ENCODE measurements at regions of chrX and their contacts with region 1.

Region 1: DNA sequence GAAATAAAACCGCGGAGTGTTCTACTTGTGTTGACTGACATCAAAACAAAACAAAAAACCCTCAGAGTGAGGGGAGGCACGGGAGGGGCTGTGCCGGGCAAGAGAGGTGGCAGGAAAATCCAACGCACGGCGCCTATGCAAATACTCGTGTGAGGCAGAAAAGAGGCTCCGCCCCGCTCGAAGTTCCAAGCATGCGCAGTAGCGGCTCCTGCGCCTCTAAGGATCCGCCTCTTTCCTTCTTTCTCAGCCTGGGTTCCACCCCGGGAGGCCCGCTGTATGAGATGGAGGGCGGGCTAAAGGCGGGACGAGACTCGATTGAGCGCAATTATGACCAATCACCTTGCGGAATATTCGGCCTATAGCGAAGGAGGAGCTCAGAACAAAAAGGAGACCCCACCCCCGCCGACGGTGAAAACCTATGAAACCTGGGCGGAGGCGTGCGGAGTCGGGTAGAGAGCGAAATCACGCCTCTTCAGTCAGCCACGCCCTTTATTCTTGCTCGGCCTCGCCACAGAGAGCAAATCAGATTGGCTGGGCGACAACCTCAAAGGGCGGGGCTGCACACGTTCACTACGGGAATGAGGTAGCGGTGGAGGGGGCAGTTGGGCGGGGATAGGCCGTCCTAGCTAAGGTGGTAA is 720 bp upstream of the CDK16 start:
- DNase-seq: peak; percentile 95 to 100 (median 97)
- H3K4me3 ChIP-seq: peak overlapping the region; percentile 71 to 88 (median 79)
- H3K4me3 Mint-ChIP-seq: peak overlapping the region; percentile 80 to 93
- H3K27ac ChIP-seq: peak overlapping the region; percentile 95 to 98
- H3K27ac Mint-ChIP-seq: peak overlapping the region; percentile 95 to 99 (median 98)
- H3K4me1 ChIP-seq: peaks cover 28 to 39% of the 10 kb centered on the region in 2 donors
- H3K4me1 Mint-ChIP-seq: peaks cover 45% of the 10 kb centered on the region
- H3K27me3 ChIP-seq: no peaks in the 10 kb centered on the region
- H3K27me3 Mint-ChIP-seq: peaks cover 0 to 16% (median 0%) of the 10 kb centered on the region in 3 donors
- CTCF ChIP-seq: no peak

Region 2: GRCh38 chrX:46918434-46918833 is 299.3 kb before region 1 on chrX:
- intact Hi-C with region 1: no loop called
- DNase-seq: no peak
- H3K4me3 ChIP-seq: no peak overlapping the region
- H3K4me3 Mint-ChIP-seq: no peak overlapping the region
- H3K27ac ChIP-seq: no peak overlapping the region
- H3K27ac Mint-ChIP-seq: no peak overlapping the region
- H3K4me1 ChIP-seq: peaks cover 7 to 8% of the 10 kb centered on the region in 2 donors
- H3K4me1 Mint-ChIP-seq: peaks cover 10% of the 10 kb centered on the region
- H3K27me3 ChIP-seq: peaks cover 0 to 9% of the 10 kb centered on the region in 2 donors
- H3K27me3 Mint-ChIP-seq: peaks cover 6 to 16% (median 6%) of the 10 kb centered on the region in 3 donors
- CTCF ChIP-seq: no peak

Region 3: DNA sequence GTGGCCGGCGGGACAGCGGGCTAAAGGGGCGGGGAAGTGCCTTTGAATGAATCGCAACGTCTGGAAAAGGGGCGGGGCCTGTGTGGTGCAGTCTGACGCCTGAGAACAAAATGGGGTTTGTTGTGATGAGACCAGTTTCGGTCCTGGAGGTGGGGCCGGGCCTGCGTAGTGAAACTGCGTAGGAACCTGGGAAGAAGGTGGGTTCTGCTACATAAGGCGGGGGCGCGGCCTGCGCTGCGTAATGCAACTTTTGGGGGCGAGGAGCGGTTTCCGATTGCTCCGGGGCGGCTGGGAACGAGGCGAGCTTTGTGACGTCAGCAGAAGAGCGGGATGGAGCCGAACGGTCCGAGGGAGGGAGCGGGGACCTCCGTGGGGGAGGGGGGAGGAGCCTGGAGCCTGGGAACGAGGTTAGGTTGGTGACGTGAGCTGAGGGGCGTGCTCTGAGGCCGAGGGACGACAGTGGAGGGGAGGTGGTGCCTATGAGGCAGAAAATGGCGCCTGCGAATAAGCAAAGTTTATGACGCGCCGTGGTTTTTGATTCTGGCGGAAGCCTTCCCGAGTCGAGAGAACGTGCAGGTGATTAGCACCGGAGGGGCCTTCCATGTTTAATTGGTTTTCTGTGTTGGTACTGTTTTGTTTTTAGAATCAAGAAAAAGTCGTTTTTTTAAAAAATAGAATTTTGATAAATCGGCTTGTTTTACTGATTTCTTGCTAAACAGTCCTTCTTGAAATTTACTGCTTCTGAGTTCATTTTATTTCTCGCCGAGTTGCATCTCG is 15.8 kb after region 1 on chrX:
- intact Hi-C with region 1: loop called in 1 of 2 experiments (anchors 2 kb)
- DNase-seq: peak; percentile 91 to 97 (median 95)
- H3K4me3 ChIP-seq: peak overlapping the region; percentile 76 to 82 (median 77)
- H3K4me3 Mint-ChIP-seq: peak overlapping the region; percentile 87 to 96
- H3K27ac ChIP-seq: peak overlapping the region; percentile 93 to 95
- H3K27ac Mint-ChIP-seq: peak overlapping the region; percentile 99 to 100 (median 100)
- H3K4me1 ChIP-seq: peaks cover 8 to 14% of the 10 kb centered on the region in 2 donors
- H3K4me1 Mint-ChIP-seq: peaks cover 4% of the 10 kb centered on the region
- H3K27me3 ChIP-seq: peaks cover 0 to 17% of the 10 kb centered on the region in 2 donors
- H3K27me3 Mint-ChIP-seq: peaks cover 0 to 58% (median 0%) of the 10 kb centered on the region in 3 donors
- CTCF ChIP-seq: no peak